ENCODE measurements at regions of chr6 and their contacts with region 1.

Region 1: DNA sequence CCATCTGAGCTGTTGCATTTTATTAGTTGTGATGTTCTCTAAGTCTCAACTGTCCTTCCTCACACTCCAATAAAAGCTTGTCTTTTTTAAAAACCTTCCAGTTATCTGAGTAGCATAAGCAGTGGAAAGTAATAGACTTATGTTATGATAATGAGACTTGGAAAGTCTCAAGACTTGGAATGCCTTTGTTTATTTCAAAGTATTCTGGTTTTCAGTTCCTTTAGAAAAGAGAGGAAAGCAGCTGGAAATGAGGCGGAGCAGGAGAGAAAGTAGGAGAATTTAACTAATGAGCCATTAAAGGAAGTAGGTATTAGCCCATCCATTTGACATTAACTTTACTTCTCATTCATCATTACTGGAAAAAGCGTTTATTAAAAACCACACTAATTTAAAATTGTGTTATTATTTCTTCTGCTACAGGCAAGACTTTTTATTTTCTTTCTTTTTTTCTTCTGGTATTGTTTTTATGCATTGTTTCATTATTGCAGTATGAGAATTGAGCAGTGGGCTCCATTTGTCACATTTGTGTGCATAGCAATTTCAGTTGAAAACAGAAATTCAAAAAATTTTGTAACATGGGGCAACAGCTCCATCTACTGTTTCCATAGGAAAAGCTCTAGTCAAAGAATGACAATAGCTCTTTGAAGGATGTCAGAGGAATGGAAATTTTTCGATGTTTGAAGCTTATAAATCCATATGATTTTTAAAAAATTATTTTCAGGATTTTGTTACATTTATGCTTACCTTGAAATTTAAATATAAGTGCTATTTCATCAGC is 194.8 kb downstream of the COL9A1 start:
- DNase-seq: peak; percentile 24
- ATAC-seq: peak; percentile 66; the same call in 1 of the 2 replicates
- H3K4me3 ChIP-seq: no peak overlapping the region
- H3K27ac ChIP-seq: no peak overlapping the region
- H3K4me1 ChIP-seq: no peaks in the 10 kb centered on the region
- H3K27me3 ChIP-seq: peaks cover 7% of the 10 kb centered on the region
- CTCF ChIP-seq: peak; percentile 75; the same call in 1 of the 2 replicates

Region 2: DNA sequence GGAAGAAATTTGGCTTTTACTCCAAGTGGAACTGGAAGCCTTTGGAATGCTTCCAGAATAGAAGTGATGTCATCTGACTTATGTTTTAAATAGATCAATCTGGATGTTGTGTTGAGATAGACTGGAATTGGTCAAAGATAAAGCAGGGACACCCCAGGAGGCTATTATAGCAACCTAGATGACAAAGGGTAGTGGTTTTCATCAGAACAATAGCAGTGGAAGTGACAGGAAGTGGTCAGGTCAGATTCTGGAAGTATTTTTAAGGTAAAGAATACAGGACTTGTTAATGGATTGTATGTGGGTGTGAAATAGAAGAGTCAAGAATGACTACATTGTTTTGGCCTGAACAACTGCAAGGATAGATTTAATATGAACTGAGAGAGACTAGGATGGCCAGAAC is 1281.5 kb before region 1 on chr6:
- CTCF ChIA-PET with region 1: no interaction called
- POLR2A ChIA-PET with region 1: interaction called, 10 read pairs
- in situ Hi-C with region 1: no loop called
- intact Hi-C with region 1: no loop called
- DNase-seq: no peak
- ATAC-seq: no peak
- H3K4me3 ChIP-seq: no peak overlapping the region
- H3K27ac ChIP-seq: no peak overlapping the region
- H3K4me1 ChIP-seq: no peaks in the 10 kb centered on the region
- H3K27me3 ChIP-seq: no peaks in the 10 kb centered on the region
- CTCF ChIP-seq: no peak

Region 3: GRCh38 chr6:68876792-68877493 is 1231.1 kb before region 1 on chr6:
- CTCF ChIA-PET with region 1: no interaction called
- POLR2A ChIA-PET with region 1: no interaction called
- in situ Hi-C with region 1: no loop called
- intact Hi-C with region 1: loop called (anchors 5 kb)
- DNase-seq: no peak
- ATAC-seq: no peak
- H3K4me3 ChIP-seq: no peak overlapping the region
- H3K27ac ChIP-seq: no peak overlapping the region
- H3K4me1 ChIP-seq: no peaks in the 10 kb centered on the region
- H3K27me3 ChIP-seq: no peaks in the 10 kb centered on the region; the same call in 1 of the 2 replicates
- CTCF ChIP-seq: peak; percentile 22; the same call in 1 of the 2 replicates

Region 4: DNA sequence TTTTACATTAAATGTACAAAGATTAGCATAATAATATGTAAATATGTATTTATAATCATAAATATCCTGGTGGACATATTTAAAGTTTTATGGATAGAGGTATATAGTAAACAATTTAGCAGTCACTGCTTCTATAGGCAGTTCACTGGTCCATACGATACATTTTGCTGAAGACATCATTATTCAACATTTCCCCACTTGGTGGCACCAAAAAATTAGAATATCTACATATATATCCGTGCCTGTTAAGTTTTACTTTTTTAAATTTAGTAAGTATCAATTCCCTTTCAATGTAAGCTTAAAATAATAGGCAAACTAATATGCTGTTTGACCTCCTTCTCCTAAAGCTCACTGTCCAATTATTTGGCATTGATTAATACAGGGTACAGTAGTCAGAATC is 375.4 kb before region 1 on chr6:
- CTCF ChIA-PET with region 1: interaction called, 5 read pairs
- POLR2A ChIA-PET with region 1: no interaction called
- in situ Hi-C with region 1: no loop called
- intact Hi-C with region 1: loop called (anchors 2 kb)
- DNase-seq: peak; percentile 13
- ATAC-seq: no peak
- H3K4me3 ChIP-seq: no peak overlapping the region
- H3K27ac ChIP-seq: no peak overlapping the region
- H3K4me1 ChIP-seq: no peaks in the 10 kb centered on the region
- H3K27me3 ChIP-seq: no peaks in the 10 kb centered on the region
- CTCF ChIP-seq: peak; percentile 29; the same call in 1 of the 2 replicates

Region 5: GRCh38 chr6:69835414-69836179 is 272.4 kb before region 1 on chr6:
- CTCF ChIA-PET with region 1: no interaction called
- POLR2A ChIA-PET with region 1: no interaction called
- in situ Hi-C with region 1: no loop called
- intact Hi-C with region 1: loop called (anchors 1 kb)
- DNase-seq: peak; percentile 32
- ATAC-seq: no peak
- H3K4me3 ChIP-seq: no peak overlapping the region
- H3K27ac ChIP-seq: no peak overlapping the region
- H3K4me1 ChIP-seq: no peaks in the 10 kb centered on the region
- H3K27me3 ChIP-seq: peaks cover 7% of the 10 kb centered on the region
- CTCF ChIP-seq: peak; percentile 81; the same call in 1 of the 2 replicates

Region 6: DNA sequence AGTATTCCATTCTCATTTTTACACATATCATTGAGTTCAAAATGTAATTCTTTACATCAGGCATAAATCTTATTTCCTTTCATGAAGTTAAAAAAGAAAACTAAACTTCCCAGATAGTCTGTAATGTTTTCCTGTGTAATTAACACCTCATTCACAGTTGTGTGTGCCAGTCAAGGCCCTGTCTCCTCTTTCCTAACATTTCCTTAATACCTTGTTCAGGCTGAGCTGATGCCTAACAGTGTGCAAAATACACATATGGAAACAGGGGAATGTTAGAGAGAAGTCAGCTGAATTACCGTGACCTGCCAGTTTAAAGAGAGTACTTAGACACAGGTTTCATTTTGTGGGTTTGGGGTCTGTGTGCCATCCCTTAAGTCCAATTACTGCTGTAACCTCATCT is 13.9 kb before region 1 on chr6:
- CTCF ChIA-PET with region 1: interaction called, 17 read pairs
- POLR2A ChIA-PET with region 1: no interaction called
- in situ Hi-C with region 1: no loop called
- intact Hi-C with region 1: no loop called
- DNase-seq: no peak
- ATAC-seq: no peak
- H3K4me3 ChIP-seq: no peak overlapping the region
- H3K27ac ChIP-seq: no peak overlapping the region
- H3K4me1 ChIP-seq: no peaks in the 10 kb centered on the region
- H3K27me3 ChIP-seq: no peaks in the 10 kb centered on the region
- CTCF ChIP-seq: no peak

Region 7: GRCh38 chr6:70310063-70310694 is 202.1 kb after region 1 on chr6:
- CTCF ChIA-PET with region 1: no interaction called
- POLR2A ChIA-PET with region 1: no interaction called
- in situ Hi-C with region 1: no loop called
- intact Hi-C with region 1: no loop called
- DNase-seq: peak; percentile 33
- ATAC-seq: no peak
- H3K4me3 ChIP-seq: no peak overlapping the region
- H3K27ac ChIP-seq: no peak overlapping the region
- H3K4me1 ChIP-seq: 0 out of 2 replicates have a peak, but pooled peaks cover 3% of the 10 kb centered on the region
- H3K27me3 ChIP-seq: peaks cover 10% of the 10 kb centered on the region
- CTCF ChIP-seq: peak; percentile 72; the same call in 1 of the 2 replicates